Calu3 (cell line): ENCODE measurements at regions of chr3 and their contacts with region 1.

Region 1: DNA sequence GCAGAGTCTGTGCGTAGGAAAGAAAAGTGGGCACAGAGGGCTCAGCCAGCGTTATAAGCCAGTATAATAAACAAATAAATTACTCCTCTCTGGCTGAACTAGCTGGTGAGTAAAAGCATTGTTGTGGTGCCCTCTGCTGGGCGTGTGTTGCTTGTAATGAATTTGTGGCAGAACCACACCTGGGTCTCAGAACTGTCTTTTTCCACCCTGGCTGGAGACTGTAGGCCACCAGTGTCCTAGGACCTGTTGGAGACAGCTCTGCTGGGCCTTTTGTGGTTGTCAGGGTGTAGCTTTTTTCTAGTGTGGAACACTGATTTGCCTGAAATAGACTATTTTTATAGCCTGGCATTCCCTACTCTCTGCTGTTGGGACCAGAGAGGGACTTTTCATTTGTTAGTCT is 130.5 kb upstream of the EIF1B start:
- DNase-seq: peak; percentile 82
- H3K4me3 Mint-ChIP-seq: no peak overlapping the region
- H3K27ac Mint-ChIP-seq: no peak overlapping the region
- H3K4me1 Mint-ChIP-seq: no peaks in the 10 kb centered on the region
- H3K27me3 Mint-ChIP-seq: no peaks in the 10 kb centered on the region
- CTCF ChIP-seq: peak; percentile 59

Region 2: GRCh38 chr3:39707314-39707909 is 471.6 kb before region 1 on chr3:
- CTCF ChIA-PET with region 1: no interaction called
- intact Hi-C with region 1: loop called (anchors 1 kb)
- DNase-seq: peak; percentile 32
- H3K4me3 Mint-ChIP-seq: no peak overlapping the region
- H3K27ac Mint-ChIP-seq: no peak overlapping the region
- H3K4me1 Mint-ChIP-seq: peaks cover 10% of the 10 kb centered on the region
- H3K27me3 Mint-ChIP-seq: no peaks in the 10 kb centered on the region
- CTCF ChIP-seq: no peak

Region 3: DNA sequence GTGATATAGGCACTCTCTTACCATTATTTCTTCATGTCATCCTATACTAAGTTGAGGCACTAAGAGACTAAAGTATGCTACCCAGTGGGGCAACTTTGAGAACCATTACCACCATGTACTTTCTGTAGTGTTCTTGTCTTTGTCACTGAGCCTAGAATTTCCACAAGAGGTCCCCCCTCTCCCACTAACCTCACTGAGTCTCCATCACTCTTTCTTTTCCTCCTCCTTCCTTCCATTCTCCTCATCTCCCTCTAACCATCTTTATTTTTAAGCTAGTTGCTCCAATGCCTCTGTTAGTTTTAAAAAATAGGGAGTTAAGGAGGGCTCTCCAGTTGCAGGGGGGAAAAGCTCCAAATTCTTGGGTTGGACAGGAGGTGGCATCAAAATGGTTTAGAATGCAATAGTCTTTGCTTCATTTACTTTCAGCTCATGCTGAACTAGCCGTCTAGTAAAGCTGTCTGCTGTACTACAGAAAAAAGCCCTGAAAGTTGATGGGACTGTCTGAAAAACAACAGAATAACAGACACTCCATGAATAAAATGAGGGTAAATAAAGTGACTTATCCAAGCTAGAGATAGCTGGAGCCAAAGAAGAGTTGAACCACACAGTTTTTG is 454.7 kb before region 1 on chr3:
- CTCF ChIA-PET with region 1: interaction called, 15 read pairs
- intact Hi-C with region 1: loop called (anchors 1 kb)
- DNase-seq: peak; percentile 29
- H3K4me3 Mint-ChIP-seq: no peak overlapping the region
- H3K27ac Mint-ChIP-seq: no peak overlapping the region
- H3K4me1 Mint-ChIP-seq: no peaks in the 10 kb centered on the region
- H3K27me3 Mint-ChIP-seq: no peaks in the 10 kb centered on the region
- CTCF ChIP-seq: no peak

Region 4: DNA sequence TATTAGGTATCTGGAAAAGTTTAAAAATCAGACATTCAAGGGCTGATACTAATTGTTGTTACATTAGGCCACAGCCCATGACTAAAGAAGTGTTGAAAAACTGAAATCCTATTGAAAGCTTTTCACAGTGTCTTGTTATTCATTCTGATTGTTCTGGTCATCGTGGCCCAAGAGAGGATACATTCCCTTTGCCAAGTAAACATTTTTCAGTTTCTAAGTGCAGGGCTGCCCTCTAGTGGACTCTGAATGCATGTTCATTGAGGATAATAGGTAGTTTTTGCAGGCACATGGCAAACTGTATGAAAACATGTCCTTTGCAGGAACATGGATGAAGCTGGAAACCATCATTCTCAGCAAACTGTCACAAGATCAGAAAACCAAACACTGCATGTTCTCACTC is 188.5 kb before region 1 on chr3:
- CTCF ChIA-PET with region 1: no interaction called
- intact Hi-C with region 1: loop called (anchors 5 kb)
- DNase-seq: peak; percentile 36
- H3K4me3 Mint-ChIP-seq: no peak overlapping the region
- H3K27ac Mint-ChIP-seq: no peak overlapping the region
- H3K4me1 Mint-ChIP-seq: no peaks in the 10 kb centered on the region
- H3K27me3 Mint-ChIP-seq: no peaks in the 10 kb centered on the region
- CTCF ChIP-seq: peak; percentile 41

Region 5: DNA sequence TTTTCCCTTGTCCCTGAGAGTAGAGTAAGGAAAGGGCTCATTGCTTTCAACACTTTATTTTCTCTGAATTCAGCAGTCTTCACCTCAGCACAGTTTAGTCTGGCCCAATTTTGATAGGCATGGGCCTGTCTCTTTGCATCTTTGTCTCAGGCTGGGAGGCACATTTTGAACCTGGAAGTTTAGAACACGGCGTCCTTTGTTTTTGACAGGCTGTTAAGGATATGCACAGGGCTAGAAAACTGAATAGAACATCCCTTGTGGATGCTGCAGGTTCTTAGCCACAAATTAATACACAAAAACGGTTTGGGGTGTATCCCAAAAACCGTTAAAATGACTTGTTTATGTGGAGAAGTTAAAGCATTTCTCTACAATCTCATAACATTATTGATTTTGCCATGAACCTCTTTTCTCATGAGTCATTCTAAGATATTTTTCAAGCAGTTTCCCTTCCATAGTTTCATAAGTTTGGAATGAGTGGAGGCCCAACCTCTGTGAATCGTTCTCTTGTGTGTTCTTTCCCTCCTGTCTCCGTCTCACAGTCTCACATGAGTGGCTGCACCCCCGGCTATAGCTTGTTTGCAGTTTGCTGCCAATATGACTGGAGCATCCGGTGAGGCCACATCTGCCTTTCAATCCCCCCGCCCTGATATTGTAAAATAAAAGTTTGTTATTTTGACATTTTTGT is 62.4 kb before region 1 on chr3:
- CTCF ChIA-PET with region 1: no interaction called
- intact Hi-C with region 1: loop called (anchors 5 kb)
- DNase-seq: peak; percentile 74
- H3K4me3 Mint-ChIP-seq: peak overlapping the region; percentile 28
- H3K27ac Mint-ChIP-seq: peak overlapping the region; percentile 86
- H3K4me1 Mint-ChIP-seq: peaks cover 64% of the 10 kb centered on the region
- H3K27me3 Mint-ChIP-seq: no peaks in the 10 kb centered on the region
- CTCF ChIP-seq: no peak